ENCODE measurements at regions of chr17 and their contacts with region 1.

Region 1: DNA sequence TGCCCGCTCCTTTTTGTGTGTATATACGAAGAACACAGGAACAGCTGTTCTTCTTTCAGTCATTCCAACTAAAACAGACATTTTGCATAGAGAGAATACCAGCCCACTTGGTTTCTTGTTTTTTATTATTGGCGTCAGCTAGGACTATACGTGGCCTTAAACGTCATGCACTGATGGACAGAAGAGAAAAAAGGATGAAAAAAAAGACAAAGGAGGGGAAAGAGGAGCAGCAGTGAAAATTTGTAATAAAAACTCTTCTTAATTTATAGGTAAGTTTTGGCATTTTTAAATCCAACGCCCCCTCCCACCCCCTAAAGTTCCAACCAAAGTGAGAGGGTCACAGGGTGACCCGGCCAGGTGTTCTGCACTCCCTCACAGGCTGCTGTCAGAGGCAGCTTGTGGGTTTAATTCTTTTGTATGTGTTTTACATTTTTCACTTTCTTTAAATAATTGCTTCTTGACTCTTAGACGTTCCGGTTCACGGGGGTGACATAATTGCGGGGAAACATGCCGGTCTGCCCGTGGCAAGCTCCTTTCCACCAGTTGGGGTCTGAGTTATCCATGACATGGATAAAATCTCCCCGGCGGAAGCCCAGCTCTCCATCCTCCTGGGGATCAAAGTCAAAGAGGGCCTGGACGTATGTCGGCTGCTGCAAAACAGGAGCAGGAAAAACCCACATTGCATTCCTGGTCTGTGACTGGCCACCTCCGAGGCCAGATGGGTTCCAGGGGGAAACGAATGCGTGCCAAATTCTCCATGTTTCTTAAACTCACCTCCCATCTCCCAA is 30.9 kb upstream of the SLC25A19 start:
- DNase-seq: no peak
- ATAC-seq: no peak
- H3K4me3 Mint-ChIP-seq: no peak overlapping the region
- H3K27ac Mint-ChIP-seq: peak overlapping the region; percentile 14; the same call in 1 of the 2 replicates
- H3K4me1 Mint-ChIP-seq: peaks cover 16% of the 10 kb centered on the region
- H3K27me3 Mint-ChIP-seq: no peaks in the 10 kb centered on the region
- CTCF ChIP-seq: no peak

Region 2: DNA sequence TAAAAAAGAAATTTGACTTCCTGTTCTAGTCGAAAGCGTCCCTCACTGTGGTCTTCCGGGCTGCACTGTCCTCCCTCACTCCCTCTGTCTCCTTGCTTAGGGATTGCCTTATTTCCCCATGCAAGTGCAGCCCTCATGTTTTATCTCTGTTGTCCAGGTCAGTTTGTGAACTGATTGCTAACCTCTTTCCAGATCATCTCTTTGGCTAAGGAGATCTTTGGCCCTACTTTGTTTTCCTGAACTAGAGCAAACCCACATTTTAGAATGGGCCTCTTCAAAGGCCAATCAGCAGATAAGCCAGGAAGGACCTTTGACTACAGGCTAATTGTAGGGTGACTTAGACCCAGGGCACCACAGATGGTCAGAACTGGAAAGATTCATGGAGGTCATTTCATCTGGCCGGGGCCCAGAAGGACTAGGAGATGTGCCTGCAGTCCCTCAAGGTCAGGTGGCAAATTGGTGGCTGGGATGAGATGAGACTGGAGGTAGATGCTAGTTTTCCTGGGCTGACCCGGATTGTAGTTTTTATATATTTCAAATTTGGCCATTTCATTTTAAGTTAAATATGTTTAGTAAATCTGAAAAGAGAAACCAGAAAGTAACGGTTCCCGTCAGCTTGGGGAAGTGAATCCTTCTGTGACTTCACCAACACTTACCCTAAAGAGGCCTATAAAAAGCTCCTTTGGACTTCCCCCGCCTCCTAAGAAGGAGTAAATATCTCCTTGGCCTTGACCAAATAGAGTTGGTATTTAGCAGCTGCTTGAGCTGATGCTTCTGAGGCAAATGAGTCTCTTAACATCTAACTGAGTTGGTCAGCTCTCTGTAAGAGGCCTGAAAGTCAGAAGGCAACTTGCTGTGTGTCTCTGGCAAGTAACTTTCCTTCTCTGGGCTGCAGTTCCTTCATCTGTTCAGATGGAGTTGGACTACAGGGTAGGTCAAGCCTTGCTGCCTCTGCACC is 24.6 kb before region 1 on chr17:
- CTCF ChIA-PET with region 1: no interaction called
- POLR2A ChIA-PET with region 1: no interaction called
- DNase-seq: no peak
- ATAC-seq: no peak
- H3K4me3 Mint-ChIP-seq: no peak overlapping the region
- H3K27ac Mint-ChIP-seq: no peak overlapping the region
- H3K4me1 Mint-ChIP-seq: no peaks in the 10 kb centered on the region
- H3K27me3 Mint-ChIP-seq: no peaks in the 10 kb centered on the region
- CTCF ChIP-seq: no peak

Region 3: GRCh38 chr17:75338335-75338734 is 18.2 kb after region 1 on chr17:
- CTCF ChIA-PET with region 1: interaction called, 20 read pairs
- POLR2A ChIA-PET with region 1: no interaction called
- DNase-seq: no peak
- ATAC-seq: no peak
- H3K4me3 Mint-ChIP-seq: no peak overlapping the region
- H3K27ac Mint-ChIP-seq: peak overlapping the region; percentile 92
- H3K4me1 Mint-ChIP-seq: peaks cover 47% of the 10 kb centered on the region
- H3K27me3 Mint-ChIP-seq: no peaks in the 10 kb centered on the region
- CTCF ChIP-seq: no peak

Region 4: GRCh38 chr17:75352079-75352569 is 32.0 kb after region 1 on chr17:
- CTCF ChIA-PET with region 1: interaction called, 20 read pairs
- POLR2A ChIA-PET with region 1: no interaction called
- DNase-seq: peak; percentile 66
- ATAC-seq: peak; percentile 94
- H3K4me3 Mint-ChIP-seq: peak overlapping the region; percentile 10; the same call in 1 of the 2 replicates
- H3K27ac Mint-ChIP-seq: peak overlapping the region; percentile 97
- H3K4me1 Mint-ChIP-seq: peaks cover 53% of the 10 kb centered on the region
- H3K27me3 Mint-ChIP-seq: no peaks in the 10 kb centered on the region
- CTCF ChIP-seq: no peak

Region 5: GRCh38 chr17:75380315-75380714 is 60.2 kb after region 1 on chr17:
- CTCF ChIA-PET with region 1: interaction called, 11 read pairs
- POLR2A ChIA-PET with region 1: no interaction called
- DNase-seq: no peak
- ATAC-seq: no peak
- H3K4me3 Mint-ChIP-seq: no peak overlapping the region
- H3K27ac Mint-ChIP-seq: peak overlapping the region; percentile 73
- H3K4me1 Mint-ChIP-seq: peaks cover 21% of the 10 kb centered on the region
- H3K27me3 Mint-ChIP-seq: no peaks in the 10 kb centered on the region
- CTCF ChIP-seq: no peak

Region 6: GRCh38 chr17:75405365-75406221 is 85.5 kb after region 1 on chr17 and contains the start of gene GRB2:
- CTCF ChIA-PET with region 1: interaction called, 14 read pairs
- POLR2A ChIA-PET with region 1: no interaction called
- DNase-seq: peak; percentile 99
- ATAC-seq: peak; percentile 88
- H3K4me3 Mint-ChIP-seq: peak within 1 kb of the TSS; percentile 87
- H3K27ac Mint-ChIP-seq: no peak within 1 kb of the TSS
- H3K4me1 Mint-ChIP-seq: peaks cover 15% of the 10 kb centered on the region
- H3K27me3 Mint-ChIP-seq: peaks cover 3% of the 10 kb centered on the region; the same call in 1 of the 2 replicates
- CTCF ChIP-seq: no peak
- total RNA-seq, gene GRB2: 82.9 to 93.3 TPM (median 92.6 TPM) in 3 replicates

Measured in WTC11 (cell line).